Mammary epithelial cell (primary cell): ENCODE measurements at regions of chr7 and their contacts with region 1.

Region 1: DNA sequence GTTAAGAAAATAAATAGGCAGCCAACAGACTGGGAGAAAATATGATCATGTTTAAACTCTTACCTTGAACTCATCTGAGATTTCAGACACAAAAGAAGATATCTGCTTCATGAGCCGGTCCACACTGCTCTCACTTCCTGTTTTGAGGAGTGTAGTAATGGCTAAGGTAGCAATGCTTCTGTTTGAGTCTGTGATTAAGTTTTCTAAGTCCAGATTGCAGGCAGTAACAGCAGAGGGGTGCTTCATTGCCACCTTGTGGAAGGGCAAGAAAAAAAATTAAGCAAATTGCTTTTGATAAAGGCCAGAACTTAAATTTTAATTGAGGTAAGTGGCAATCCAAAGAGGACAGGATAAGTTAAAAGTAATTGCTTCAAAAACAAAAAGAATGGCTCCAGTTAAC is 69.1 kb downstream of the MEST start:
- DNase-seq: peak; percentile 70
- H3K4me3 ChIP-seq: no peak overlapping the region
- H3K27ac ChIP-seq: no peak overlapping the region
- H3K4me1 ChIP-seq: no peaks in the 10 kb centered on the region
- H3K27me3 ChIP-seq: no peaks in the 10 kb centered on the region
- CTCF ChIP-seq: peak; percentile 47 to 73

Region 2: GRCh38 chr7:130096243-130096827 is 464.6 kb before region 1 on chr7:
- CTCF ChIA-PET with region 1: no interaction called
- dilution Hi-C with region 1: no loop called
- in situ Hi-C with region 1: no loop called
- intact Hi-C with region 1: loop called (anchors 1 kb)
- DNase-seq: no peak
- H3K4me3 ChIP-seq: no peak overlapping the region
- H3K27ac ChIP-seq: no peak overlapping the region
- H3K4me1 ChIP-seq: no peaks in the 10 kb centered on the region
- H3K27me3 ChIP-seq: no peaks in the 10 kb centered on the region
- CTCF ChIP-seq: peak; percentile 10 to 48

Region 3: GRCh38 chr7:130242198-130243014 is 318.6 kb before region 1 on chr7:
- CTCF ChIA-PET with region 1: no interaction called
- dilution Hi-C with region 1: no loop called
- in situ Hi-C with region 1: no loop called
- intact Hi-C with region 1: loop called (anchors 1 kb)
- DNase-seq: peak; percentile 93
- H3K4me3 ChIP-seq: no peak overlapping the region
- H3K27ac ChIP-seq: peak overlapping the region; percentile 76
- H3K4me1 ChIP-seq: peaks cover 13% of the 10 kb centered on the region
- H3K27me3 ChIP-seq: no peaks in the 10 kb centered on the region
- CTCF ChIP-seq: peak; percentile 78 to 89

Region 4: DNA sequence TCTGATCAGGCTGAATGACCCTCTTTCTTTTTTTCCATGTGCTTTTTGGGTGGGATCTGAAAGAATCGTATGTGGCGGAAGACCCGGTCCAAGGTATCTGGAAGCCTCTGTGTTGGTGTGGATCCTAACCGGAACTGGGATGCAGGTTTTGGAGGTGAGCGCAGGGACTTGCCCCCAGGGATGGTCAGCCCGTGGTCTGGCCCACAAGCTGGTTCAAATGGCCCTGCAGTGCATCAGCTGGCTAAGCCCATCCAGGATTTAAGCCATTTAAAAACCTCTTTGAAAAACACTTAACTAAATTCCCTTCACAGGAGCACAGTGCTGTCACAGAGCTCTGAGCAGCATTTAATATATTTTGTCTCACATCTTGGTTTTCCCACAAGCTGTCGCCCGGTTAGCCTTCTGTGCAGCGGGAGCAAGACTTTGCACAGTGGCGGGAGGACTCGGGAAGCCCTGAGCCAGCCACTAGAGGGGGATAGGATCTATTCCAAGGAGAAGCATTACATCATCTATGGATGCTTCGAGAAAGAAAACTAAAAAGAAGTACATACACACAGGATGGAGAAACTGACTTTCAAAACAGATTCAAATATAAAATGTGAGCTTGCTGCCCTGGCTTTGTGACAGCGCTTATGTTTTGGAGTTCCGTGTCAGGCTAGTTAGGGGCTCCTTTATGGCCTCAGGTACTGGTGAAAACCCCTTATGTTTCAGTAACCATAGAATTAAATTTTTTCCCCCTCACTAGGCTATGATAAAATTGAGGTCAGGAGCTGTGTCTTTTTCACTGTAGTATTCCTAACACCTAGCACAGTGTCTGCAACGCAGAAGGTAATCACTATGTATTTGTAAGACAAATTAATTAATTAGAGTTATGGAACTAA is 283.0 kb before region 1 on chr7:
- CTCF ChIA-PET with region 1: no interaction called
- dilution Hi-C with region 1: no loop called
- in situ Hi-C with region 1: no loop called
- intact Hi-C with region 1: loop called (anchors 1 kb)
- DNase-seq: no peak
- H3K4me3 ChIP-seq: no peak overlapping the region
- H3K27ac ChIP-seq: no peak overlapping the region
- H3K4me1 ChIP-seq: peaks cover 76% of the 10 kb centered on the region
- H3K27me3 ChIP-seq: no peaks in the 10 kb centered on the region
- CTCF ChIP-seq: peak in 1 of 2 donors; percentile 17

Region 5: DNA sequence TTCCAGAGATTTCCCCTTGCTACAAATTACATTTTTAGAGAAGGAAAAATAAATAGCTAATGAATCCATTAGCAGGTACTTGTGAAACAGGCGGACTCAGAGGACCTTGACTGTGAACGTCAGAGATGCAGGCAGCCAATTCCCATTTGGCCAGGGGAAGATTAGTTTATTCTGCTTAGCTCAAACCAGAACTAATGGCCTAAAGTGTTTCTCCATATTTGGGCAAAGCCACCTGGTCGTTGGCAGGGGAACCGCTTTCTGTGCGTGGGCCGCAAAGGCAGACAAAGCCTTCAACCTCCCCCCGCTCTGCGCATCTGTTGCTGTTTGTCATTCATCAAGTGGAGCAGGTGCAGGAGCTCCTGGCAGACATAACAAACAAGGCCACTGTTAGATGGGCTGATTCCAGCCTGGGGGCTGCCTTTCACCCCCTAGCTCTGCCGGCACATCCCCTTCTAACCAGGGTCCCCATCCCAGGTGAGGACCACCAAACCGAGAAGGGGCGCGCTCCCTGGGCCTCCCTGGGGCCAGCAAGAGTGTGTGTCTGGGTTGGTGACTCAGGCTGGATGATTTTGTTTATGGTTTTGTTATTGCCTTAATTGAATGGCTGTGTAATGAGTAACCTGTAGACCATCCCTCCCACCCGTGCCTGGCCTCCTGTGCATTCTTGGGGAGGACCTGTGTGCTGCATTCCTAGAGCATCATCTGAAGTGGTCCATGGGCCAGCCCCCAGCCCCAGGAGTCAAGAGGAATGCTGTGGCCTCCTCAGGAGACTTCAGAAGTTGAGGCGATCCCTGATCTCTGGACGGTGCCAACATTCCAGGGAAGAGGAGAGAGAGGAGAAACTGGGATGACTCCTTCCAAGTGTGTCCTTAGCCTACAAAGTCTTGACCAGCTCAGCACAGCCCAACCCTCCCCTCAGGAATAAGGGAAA is 195.2 kb before region 1 on chr7:
- CTCF ChIA-PET with region 1: no interaction called
- dilution Hi-C with region 1: no loop called
- in situ Hi-C with region 1: no loop called
- intact Hi-C with region 1: loop called (anchors 2 kb)
- DNase-seq: peak; percentile 70
- H3K4me3 ChIP-seq: no peak overlapping the region
- H3K27ac ChIP-seq: no peak overlapping the region
- H3K4me1 ChIP-seq: peaks cover 56% of the 10 kb centered on the region
- H3K27me3 ChIP-seq: no peaks in the 10 kb centered on the region
- CTCF ChIP-seq: no peak

Region 6: GRCh38 chr7:130758429-130759056 is 197.6 kb after region 1 on chr7:
- CTCF ChIA-PET with region 1: no interaction called
- dilution Hi-C with region 1: no loop called
- in situ Hi-C with region 1: no loop called
- intact Hi-C with region 1: loop called (anchors 5 kb)
- DNase-seq: peak; percentile 11
- H3K4me3 ChIP-seq: no peak overlapping the region
- H3K27ac ChIP-seq: no peak overlapping the region
- H3K4me1 ChIP-seq: no peaks in the 10 kb centered on the region
- H3K27me3 ChIP-seq: peaks cover 1% of the 10 kb centered on the region
- CTCF ChIP-seq: peak; percentile 57 to 65

Region 7: GRCh38 chr7:130831817-130832481 is 271.0 kb after region 1 on chr7:
- CTCF ChIA-PET with region 1: no interaction called
- dilution Hi-C with region 1: no loop called
- in situ Hi-C with region 1: no loop called
- intact Hi-C with region 1: loop called (anchors 2 kb)
- DNase-seq: no peak
- H3K4me3 ChIP-seq: no peak overlapping the region
- H3K27ac ChIP-seq: no peak overlapping the region
- H3K4me1 ChIP-seq: peaks cover 3% of the 10 kb centered on the region
- H3K27me3 ChIP-seq: no peaks in the 10 kb centered on the region
- CTCF ChIP-seq: peak; percentile 61 to 73